ENCODE measurements at regions of chr11 and their contacts with region 1.

Region 1: GRCh38 chr11:82867495-82868082 is 32.6 kb downstream of the PRCP start:
- DNase-seq: peak; percentile 87 to 93
- H3K4me3 ChIP-seq: no peak overlapping the region
- H3K4me1 ChIP-seq: peaks cover 14% of the 10 kb centered on the region
- H3K27me3 ChIP-seq: no peaks in the 10 kb centered on the region

Region 2: GRCh38 chr11:82718307-82718706 is 149.3 kb before region 1 on chr11:
- in situ Hi-C with region 1: loop called (anchors 5 kb)
- DNase-seq: peak; percentile 51 to 69
- H3K4me3 ChIP-seq: no peak overlapping the region
- H3K4me1 ChIP-seq: no peaks in the 10 kb centered on the region
- H3K27me3 ChIP-seq: peaks cover 9% of the 10 kb centered on the region; the same call in 1 of the 2 replicates